Heart right ventricle (tissue), 16 donors: ENCODE measurements at regions of chr16 and their contacts with region 1.

Region 1: GRCh38 chr16:87062569-87063442 is 254.4 kb downstream of the C16orf95 start:
- DNase-seq: peak; percentile 73
- ATAC-seq: peak; percentile 88 to 93 (median 90)
- H3K4me3 ChIP-seq: peak overlapping the region in 3 of 10 donors; percentile 3 to 21 (median 15)
- H3K27ac ChIP-seq: no peak overlapping the region
- H3K4me1 ChIP-seq: peaks cover 0 to 16% (median 2%) of the 10 kb centered on the region in 9 donors
- H3K27me3 ChIP-seq: peaks cover 0 to 43% (median 21%) of the 10 kb centered on the region in 7 donors
- CTCF ChIP-seq: peak; percentile 63 to 83 (median 79)

Region 2: GRCh38 chr16:86725401-86725800 is 337.4 kb before region 1 on chr16:
- intact Hi-C with region 1: loop called in 1 of 10 experiments (anchors 5 kb)
- DNase-seq: no peak
- ATAC-seq: no peak
- H3K4me3 ChIP-seq: no peak overlapping the region
- H3K27ac ChIP-seq: no peak overlapping the region
- H3K4me1 ChIP-seq: peaks cover 0 to 11% (median 0%) of the 10 kb centered on the region in 9 donors
- H3K27me3 ChIP-seq: peaks cover 0 to 13% (median under 1%) of the 10 kb centered on the region in 7 donors
- CTCF ChIP-seq: no peak

Region 3: GRCh38 chr16:86854058-86854621 is 208.7 kb before region 1 on chr16:
- intact Hi-C with region 1: loop called in 1 of 10 experiments (anchors 10 kb)
- DNase-seq: no peak
- ATAC-seq: peak in 2 of 8 donors; percentile 28 to 33
- H3K4me3 ChIP-seq: no peak overlapping the region
- H3K27ac ChIP-seq: no peak overlapping the region
- H3K4me1 ChIP-seq: no peaks in the 10 kb centered on the region
- H3K27me3 ChIP-seq: peaks cover 0 to 6% (median 0%) of the 10 kb centered on the region in 7 donors
- CTCF ChIP-seq: no peak

Region 4: DNA sequence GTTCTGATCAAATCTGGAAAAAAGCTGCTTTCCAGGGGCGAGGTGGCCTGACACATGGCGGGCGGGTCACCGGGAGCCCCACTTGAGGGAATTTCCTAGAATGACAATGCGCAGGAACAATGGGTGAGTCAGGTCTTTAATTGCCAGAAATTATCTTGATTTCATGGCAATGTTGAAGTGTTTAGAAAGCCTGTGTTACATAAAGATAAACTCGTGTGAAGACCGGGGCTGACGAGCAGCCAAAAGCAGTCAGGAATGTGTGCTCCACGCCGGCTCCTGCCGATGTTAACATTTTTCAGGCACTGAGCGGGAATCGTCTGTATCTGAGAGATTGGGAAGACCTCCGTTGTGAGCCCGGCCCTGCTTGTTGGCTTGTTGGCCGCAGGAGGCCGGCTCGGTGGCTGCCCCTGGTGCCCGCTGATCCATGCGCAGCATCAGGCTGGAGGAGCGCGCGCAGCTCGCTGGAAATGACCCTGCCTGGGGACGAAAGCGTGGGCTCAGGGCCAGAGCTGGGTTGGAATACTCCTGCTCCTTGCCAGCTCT is 131.3 kb before region 1 on chr16:
- intact Hi-C with region 1: loop called in 1 of 10 experiments (anchors 10 kb)
- DNase-seq: peak; percentile 76 to 77
- ATAC-seq: peak; percentile 70 to 87 (median 76)
- H3K4me3 ChIP-seq: peak overlapping the region in 7 of 10 donors; percentile 3 to 28 (median 17)
- H3K27ac ChIP-seq: peak overlapping the region in 9 of 10 donors; percentile 40 to 79 (median 63)
- H3K4me1 ChIP-seq: peaks cover 7 to 40% (median 30%) of the 10 kb centered on the region in 9 donors
- H3K27me3 ChIP-seq: peaks cover 0 to 37% (median 2%) of the 10 kb centered on the region in 7 donors
- CTCF ChIP-seq: peak in 1 of 9 donors; percentile 20

Region 5: GRCh38 chr16:87278191-87279095 is 215.6 kb after region 1 on chr16:
- intact Hi-C with region 1: loop called in 8 of 10 experiments (anchors 5 to 10 kb)
- DNase-seq: peak; percentile 72 to 76
- ATAC-seq: peak; percentile 86 to 96 (median 94)
- H3K4me3 ChIP-seq: no peak overlapping the region
- H3K27ac ChIP-seq: no peak overlapping the region
- H3K4me1 ChIP-seq: peaks cover 0 to 6% (median 0%) of the 10 kb centered on the region in 9 donors
- H3K27me3 ChIP-seq: peaks cover 0 to 14% (median 0%) of the 10 kb centered on the region in 7 donors
- CTCF ChIP-seq: peak; percentile 73 to 95 (median 87)